Naive thymus-derived CD4-positive, alpha-beta T cell (primary cell): ENCODE measurements at regions of chr4 and their contacts with region 1.

Region 1: GRCh38 chr4:160956875-160957274 is 1206.9 kb downstream of the FSTL5 start:
- DNase-seq: no peak
- ATAC-seq: no peak
- H3K4me3 ChIP-seq: no peak overlapping the region
- H3K4me3 Mint-ChIP-seq: no peak overlapping the region
- H3K27ac ChIP-seq: no peak overlapping the region
- H3K27ac Mint-ChIP-seq: no peak overlapping the region
- H3K4me1 ChIP-seq: no peaks in the 10 kb centered on the region
- H3K4me1 Mint-ChIP-seq: no peaks in the 10 kb centered on the region
- H3K27me3 ChIP-seq: no peaks in the 10 kb centered on the region
- H3K27me3 Mint-ChIP-seq: no peaks in the 10 kb centered on the region

Region 2: DNA sequence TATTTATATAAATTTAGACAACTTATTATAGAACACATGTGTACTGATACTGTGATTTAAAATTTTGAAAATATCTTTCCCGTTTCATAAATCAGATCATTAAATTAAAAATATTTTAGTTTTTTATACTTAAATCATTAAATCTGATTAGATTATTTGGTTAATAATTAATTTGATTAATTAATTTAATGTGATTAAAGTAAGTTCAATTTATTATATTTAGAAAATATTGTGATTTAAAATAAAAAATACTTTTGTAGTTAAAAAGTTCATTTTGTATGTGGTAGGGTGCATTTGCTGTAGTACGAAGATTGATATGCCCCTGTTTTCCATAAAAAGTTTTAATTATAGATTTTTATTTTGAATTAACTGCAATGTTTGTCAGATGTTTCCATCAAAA is 530.6 kb before region 1 on chr4:
- CTCF ChIA-PET with region 1: no interaction called
- POLR2A ChIA-PET with region 1: no interaction called
- intact Hi-C with region 1: no loop called
- DNase-seq: no peak
- ATAC-seq: no peak
- H3K4me3 ChIP-seq: no peak overlapping the region
- H3K4me3 Mint-ChIP-seq: no peak overlapping the region
- H3K27ac ChIP-seq: no peak overlapping the region
- H3K27ac Mint-ChIP-seq: no peak overlapping the region
- H3K4me1 ChIP-seq: no peaks in the 10 kb centered on the region
- H3K4me1 Mint-ChIP-seq: no peaks in the 10 kb centered on the region
- H3K27me3 ChIP-seq: no peaks in the 10 kb centered on the region
- H3K27me3 Mint-ChIP-seq: no peaks in the 10 kb centered on the region

Region 3: DNA sequence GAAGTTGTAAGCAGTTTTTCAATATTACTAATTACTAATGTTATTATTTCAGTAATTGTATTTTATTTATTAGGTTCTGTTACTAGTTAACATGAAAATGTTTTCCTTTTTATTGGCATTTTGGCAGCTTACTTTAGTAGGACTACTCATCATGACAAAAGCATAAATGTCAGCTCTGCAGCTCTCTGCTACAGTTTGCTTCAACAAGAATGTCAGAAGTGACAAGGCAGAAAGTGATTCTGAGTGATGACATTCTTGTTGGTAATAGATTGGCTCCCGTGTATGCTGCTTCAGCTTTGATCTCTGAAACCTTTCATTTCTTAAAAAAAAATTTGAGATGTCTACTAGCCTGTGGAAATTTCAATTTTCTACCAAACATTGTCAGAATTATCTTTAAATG is 13.1 kb after region 1 on chr4:
- CTCF ChIA-PET with region 1: no interaction called
- POLR2A ChIA-PET with region 1: no interaction called
- intact Hi-C with region 1: loop called in 1 of 2 experiments (anchors 1 kb)
- DNase-seq: no peak
- ATAC-seq: no peak
- H3K4me3 ChIP-seq: no peak overlapping the region
- H3K4me3 Mint-ChIP-seq: no peak overlapping the region
- H3K27ac ChIP-seq: no peak overlapping the region
- H3K27ac Mint-ChIP-seq: no peak overlapping the region
- H3K4me1 ChIP-seq: no peaks in the 10 kb centered on the region
- H3K4me1 Mint-ChIP-seq: no peaks in the 10 kb centered on the region
- H3K27me3 ChIP-seq: no peaks in the 10 kb centered on the region
- H3K27me3 Mint-ChIP-seq: no peaks in the 10 kb centered on the region